Esophagus muscularis mucosa (tissue), 4 donors: ENCODE measurements at regions of chr2 and their contacts with region 1.

Region 1: DNA sequence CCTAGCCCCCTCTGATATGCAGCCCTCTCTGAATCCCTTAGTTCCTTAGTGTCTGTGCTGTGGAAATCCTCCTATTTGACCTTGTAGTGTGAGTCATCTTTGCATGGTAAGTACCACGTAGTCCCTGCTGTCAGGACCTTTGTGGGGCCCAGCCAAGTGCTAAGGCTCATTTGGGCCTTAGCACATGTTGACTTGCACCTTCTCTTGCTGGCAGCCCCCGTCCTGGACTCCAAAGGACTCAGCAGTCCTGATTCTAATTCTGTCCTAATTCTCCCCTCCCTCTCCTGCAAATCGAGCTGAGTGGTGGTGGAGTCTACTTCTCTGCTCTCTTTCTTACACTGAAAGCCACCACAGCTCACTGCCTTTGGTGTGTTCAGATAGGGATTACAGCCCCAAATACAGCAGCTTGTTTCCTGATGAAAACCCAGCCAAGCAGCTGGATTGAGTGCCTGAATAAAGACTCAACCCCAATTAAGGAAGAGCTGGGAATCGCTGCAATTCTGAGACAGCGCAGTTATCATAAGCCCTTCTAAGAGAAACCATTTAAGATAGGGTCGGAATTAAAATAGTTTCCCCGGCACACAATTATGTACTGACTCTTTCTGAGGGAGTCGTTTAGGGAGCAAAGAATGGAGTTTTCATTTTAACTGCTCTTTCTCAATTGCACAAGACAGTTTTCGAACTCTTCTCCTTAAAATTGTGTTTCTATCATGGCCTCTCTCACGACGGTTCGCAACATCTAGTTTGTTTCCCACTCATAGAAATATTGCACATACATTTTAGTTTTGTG is 215.6 kb upstream of the TNP1 start:
- DNase-seq: no peak
- H3K4me3 ChIP-seq: no peak overlapping the region
- H3K27ac ChIP-seq: peak overlapping the region in 2 of 4 donors; percentile 23 to 37
- H3K4me1 ChIP-seq: peaks cover 10 to 21% (median 12%) of the 10 kb centered on the region in 4 donors
- H3K27me3 ChIP-seq: no peaks in the 10 kb centered on the region
- CTCF ChIP-seq: no peak
- EP300 ChIP-seq: no peak
- POLR2A ChIP-seq: no peak

Region 2: DNA sequence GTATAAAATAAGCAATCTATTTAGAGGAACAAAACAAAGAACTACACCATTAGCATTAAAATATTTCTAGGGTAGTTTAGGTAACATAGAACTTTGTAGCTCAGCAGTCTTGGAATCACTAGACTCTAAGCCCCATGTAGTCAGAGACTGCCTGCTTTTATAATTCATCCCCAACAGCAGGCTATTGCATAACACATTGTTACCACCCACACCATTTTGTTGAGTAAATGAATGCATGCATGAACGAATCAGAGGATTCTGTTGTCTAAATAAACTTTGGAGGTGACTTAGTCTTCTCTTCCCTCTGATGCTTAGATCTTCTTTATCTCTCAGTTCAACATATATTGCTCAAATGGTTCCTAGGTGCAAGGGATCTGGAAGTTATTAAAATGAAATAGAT is 48.0 kb before region 1 on chr2:
- intact Hi-C with region 1: loop called (anchors 5 kb)
- DNase-seq: no peak
- H3K4me3 ChIP-seq: no peak overlapping the region
- H3K27ac ChIP-seq: no peak overlapping the region
- H3K4me1 ChIP-seq: no peaks in the 10 kb centered on the region
- H3K27me3 ChIP-seq: no peaks in the 10 kb centered on the region
- CTCF ChIP-seq: no peak
- EP300 ChIP-seq: no peak
- POLR2A ChIP-seq: no peak